ENCODE measurements at regions of chr12 and their contacts with region 1.

Region 1: DNA sequence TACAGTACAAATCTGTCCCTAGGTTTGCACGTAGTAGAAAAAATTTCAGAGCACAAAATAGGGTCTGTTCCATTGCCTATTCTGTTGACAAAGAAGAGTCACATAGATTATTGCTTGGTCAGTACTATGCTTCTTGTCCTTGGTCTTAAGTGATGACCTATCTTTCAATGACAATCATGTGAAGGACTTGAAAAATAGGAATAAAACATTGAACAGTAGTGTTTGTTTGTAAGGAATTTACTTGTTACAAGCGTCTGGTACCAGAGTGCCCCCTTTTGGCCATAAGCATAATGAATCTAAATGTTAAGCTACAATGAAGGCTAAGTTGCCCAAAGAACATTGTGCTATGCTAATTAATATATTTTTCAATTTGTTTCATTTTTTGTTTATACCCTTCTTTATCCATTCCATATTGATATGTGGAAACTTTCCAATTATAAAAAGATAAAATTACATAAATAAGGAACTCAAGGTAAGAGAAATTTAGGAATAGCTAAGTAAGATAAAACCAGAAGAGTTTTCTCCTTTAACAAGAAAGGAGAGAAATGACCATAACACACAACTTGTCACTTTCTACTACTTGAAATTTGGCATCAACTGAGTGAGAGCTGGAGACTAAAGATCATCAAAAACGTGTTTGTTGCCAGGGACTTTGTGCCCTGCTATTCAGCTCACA is 204.7 kb downstream of the EPS8 start:
- DNase-seq: peak; percentile 43
- ATAC-seq: 0 out of 2 replicates have a peak, but pooled peaks have one; percentile 62
- H3K4me3 ChIP-seq: no peak overlapping the region
- H3K27ac ChIP-seq: no peak overlapping the region
- H3K4me1 ChIP-seq: no peaks in the 10 kb centered on the region
- H3K27me3 ChIP-seq: no peaks in the 10 kb centered on the region
- CTCF ChIP-seq: peak; percentile 55 to 75 (median 61); a peak in 5 of 6 replicates
- POLR2A ChIP-seq: no peak
- RAD21 ChIP-seq: peak; percentile 67

Region 2: GRCh38 chr12:13816394-13816793 is 1768.1 kb before region 1 on chr12:
- CTCF ChIA-PET with region 1: no interaction called
- POLR2A ChIA-PET with region 1: no interaction called
- RAD21 ChIA-PET with region 1: no interaction called
- intact Hi-C with region 1: no loop called
- DNase-seq: no peak
- ATAC-seq: no peak
- H3K4me3 ChIP-seq: no peak overlapping the region
- H3K27ac ChIP-seq: no peak overlapping the region
- H3K4me1 ChIP-seq: no peaks in the 10 kb centered on the region
- H3K27me3 ChIP-seq: no peaks in the 10 kb centered on the region
- CTCF ChIP-seq: no peak
- POLR2A ChIP-seq: no peak
- RAD21 ChIP-seq: no peak

Region 3: GRCh38 chr12:15131431-15131830 is 453.1 kb before region 1 on chr12:
- CTCF ChIA-PET with region 1: no interaction called
- POLR2A ChIA-PET with region 1: no interaction called
- RAD21 ChIA-PET with region 1: no interaction called
- intact Hi-C with region 1: no loop called
- DNase-seq: no peak
- ATAC-seq: no peak
- H3K4me3 ChIP-seq: no peak overlapping the region
- H3K27ac ChIP-seq: no peak overlapping the region
- H3K4me1 ChIP-seq: no peaks in the 10 kb centered on the region
- H3K27me3 ChIP-seq: peaks cover 34% of the 10 kb centered on the region
- CTCF ChIP-seq: no peak
- POLR2A ChIP-seq: no peak
- RAD21 ChIP-seq: no peak

Region 4: GRCh38 chr12:15276088-15276698 is 308.3 kb before region 1 on chr12:
- CTCF ChIA-PET with region 1: interaction called, 3 read pairs
- POLR2A ChIA-PET with region 1: no interaction called
- RAD21 ChIA-PET with region 1: no interaction called
- intact Hi-C with region 1: loop called (anchors 10 kb)
- DNase-seq: peak; percentile 16
- ATAC-seq: peak; percentile 76
- H3K4me3 ChIP-seq: no peak overlapping the region
- H3K27ac ChIP-seq: no peak overlapping the region
- H3K4me1 ChIP-seq: no peaks in the 10 kb centered on the region
- H3K27me3 ChIP-seq: no peaks in the 10 kb centered on the region
- CTCF ChIP-seq: peak; percentile 53 to 75 (median 55); a peak in 4 of 6 replicates
- POLR2A ChIP-seq: no peak
- RAD21 ChIP-seq: peak; percentile 69

Region 5: GRCh38 chr12:15532364-15532977 is 52.0 kb before region 1 on chr12:
- CTCF ChIA-PET with region 1: interaction called, 104 read pairs
- POLR2A ChIA-PET with region 1: interaction called, 4 read pairs
- RAD21 ChIA-PET with region 1: interaction called, 5 to 6 read pairs
- intact Hi-C with region 1: loop called (anchors 1 kb)
- DNase-seq: peak; percentile 72
- ATAC-seq: peak; percentile 96
- H3K4me3 ChIP-seq: no peak overlapping the region
- H3K27ac ChIP-seq: no peak overlapping the region
- H3K4me1 ChIP-seq: peaks cover 0 to 4% of the 10 kb centered on the region in 2 experiments; a peak in 1 of 4 replicates
- H3K27me3 ChIP-seq: no peaks in the 10 kb centered on the region
- CTCF ChIP-seq: peak; percentile 62 to 68 (median 65); a peak in 5 of 6 replicates
- POLR2A ChIP-seq: no peak
- RAD21 ChIP-seq: peak; percentile 83

Region 6: GRCh38 chr12:15563663-15564062 is 20.8 kb before region 1 on chr12:
- CTCF ChIA-PET with region 1: interaction called, 12 read pairs
- POLR2A ChIA-PET with region 1: no interaction called
- RAD21 ChIA-PET with region 1: no interaction called
- intact Hi-C with region 1: no loop called
- DNase-seq: no peak
- ATAC-seq: no peak
- H3K4me3 ChIP-seq: no peak overlapping the region
- H3K27ac ChIP-seq: no peak overlapping the region
- H3K4me1 ChIP-seq: no peaks in the 10 kb centered on the region
- H3K27me3 ChIP-seq: no peaks in the 10 kb centered on the region
- CTCF ChIP-seq: no peak
- POLR2A ChIP-seq: no peak
- RAD21 ChIP-seq: no peak

Region 7: GRCh38 chr12:15669256-15669948 is 84.9 kb after region 1 on chr12:
- CTCF ChIA-PET with region 1: no interaction called
- POLR2A ChIA-PET with region 1: no interaction called
- RAD21 ChIA-PET with region 1: no interaction called
- intact Hi-C with region 1: no loop called
- DNase-seq: no peak
- ATAC-seq: no peak
- H3K4me3 ChIP-seq: no peak overlapping the region
- H3K27ac ChIP-seq: no peak overlapping the region
- H3K4me1 ChIP-seq: peaks cover 0 to 6% of the 10 kb centered on the region in 2 experiments; a peak in 2 of 4 replicates
- H3K27me3 ChIP-seq: no peaks in the 10 kb centered on the region
- CTCF ChIP-seq: no peak
- POLR2A ChIP-seq: no peak
- RAD21 ChIP-seq: no peak

Measured in HCT116 (cell line).